ENCODE measurements at regions of chr12 and their contacts with region 1.

Region 1: DNA sequence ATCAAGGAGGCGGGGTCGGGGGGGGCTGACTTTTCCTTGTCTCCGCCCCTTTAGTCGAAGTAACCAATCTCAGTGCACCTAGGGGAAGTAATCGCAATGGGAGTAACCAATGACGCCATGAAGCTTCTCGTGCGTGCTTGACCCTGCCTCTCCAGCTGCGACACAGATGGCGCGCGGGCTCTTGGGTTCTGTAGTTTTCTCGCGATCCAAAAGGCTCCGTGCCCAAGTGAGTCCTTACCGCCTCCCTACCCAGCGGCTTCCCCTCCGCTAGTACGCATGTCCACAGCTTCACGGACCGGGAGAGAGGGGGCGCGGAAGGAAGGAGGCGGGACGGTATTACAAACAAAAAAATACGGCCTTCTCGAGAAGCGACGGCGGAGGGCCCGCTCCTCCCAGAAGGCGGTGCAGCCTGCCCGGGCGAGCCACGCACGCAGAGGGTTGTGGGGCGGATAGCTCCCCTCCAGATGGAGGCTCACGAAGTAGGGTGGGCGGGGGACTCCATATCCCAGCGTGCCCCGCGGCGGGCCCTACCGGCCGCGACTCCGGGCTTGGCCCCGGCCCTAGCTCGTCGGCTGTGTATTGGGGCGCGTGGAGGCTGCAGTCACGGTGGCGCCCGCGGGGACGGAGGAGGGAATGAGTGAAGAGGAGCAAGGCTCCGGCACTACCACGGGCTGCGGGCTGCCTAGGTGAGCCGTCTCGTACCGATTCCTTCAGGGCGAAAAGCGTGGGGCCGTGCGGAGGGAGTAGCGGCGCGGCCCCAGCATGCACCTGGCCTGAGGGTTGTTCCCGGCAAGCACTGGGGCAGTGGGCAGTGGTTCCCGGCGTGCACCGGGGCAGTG is at the start of gene TARBP2:
- DNase-seq: peak; percentile 90 to 99 (median 99)
- ATAC-seq: peak; percentile 78 to 81
- H3K4me3 Mint-ChIP-seq: peak within 1 kb of the TSS; percentile 89 to 96 (median 94)
- H3K27ac Mint-ChIP-seq: peak within 1 kb of the TSS; percentile 90 to 99 (median 97)
- H3K4me1 Mint-ChIP-seq: peaks cover 22 to 55% (median 44%) of the 10 kb centered on the region in 4 donors
- H3K27me3 Mint-ChIP-seq: no peaks in the 10 kb centered on the region
- polyA plus RNA-seq, gene TARBP2: 27.0 to 32.1 (median 27.9) TPM

Region 2: DNA sequence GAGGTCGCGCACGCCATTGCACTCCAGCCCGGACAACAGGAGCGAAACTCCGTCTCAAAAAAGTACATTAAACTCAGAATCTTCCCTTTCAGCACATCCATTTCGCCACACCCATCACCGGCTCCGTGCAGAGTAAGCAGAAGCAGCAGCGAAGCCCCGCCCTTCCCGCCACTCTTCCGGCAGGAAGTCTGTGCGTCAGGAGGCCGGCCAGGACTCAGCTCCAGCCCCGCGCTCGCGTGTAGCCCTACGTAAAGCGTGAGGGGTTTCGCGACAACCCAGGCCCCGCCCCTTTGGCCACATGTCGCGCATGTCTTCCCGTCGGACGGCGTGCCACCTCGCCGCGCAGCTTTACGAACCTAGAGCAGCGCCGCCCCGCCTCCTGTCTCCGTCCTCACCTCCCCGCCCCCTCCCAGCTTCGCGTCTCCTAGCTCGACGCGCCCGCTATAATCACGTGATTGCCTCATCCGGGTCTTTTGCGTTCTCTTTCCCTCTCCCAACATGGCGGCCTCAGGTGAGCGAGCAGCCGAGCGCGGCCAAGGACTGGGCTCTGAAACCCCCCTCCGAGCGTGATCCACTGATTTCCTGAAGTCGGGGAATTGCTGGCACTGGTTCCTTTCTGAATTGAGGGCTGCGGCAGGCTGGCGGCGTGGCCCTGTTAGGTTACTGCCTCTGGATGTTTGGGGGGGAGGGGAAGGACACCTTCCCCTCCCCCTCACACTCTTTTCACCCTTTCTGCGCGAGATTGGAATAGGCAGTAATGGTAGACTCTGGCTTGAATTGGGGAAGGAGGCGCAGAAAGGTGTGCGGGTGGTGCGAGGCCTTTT is 494.8 kb before region 1 on chr12 and contains the start of gene EIF4B:
- POLR2A ChIA-PET with region 1: interaction called, 12 read pairs
- DNase-seq: peak; percentile 95 to 100 (median 99)
- ATAC-seq: peak; percentile 91 to 93
- H3K4me3 Mint-ChIP-seq: peak within 1 kb of the TSS; percentile 96 to 100 (median 98)
- H3K27ac Mint-ChIP-seq: peak within 1 kb of the TSS; percentile 96 to 99 (median 99)
- H3K4me1 Mint-ChIP-seq: peaks cover 20 to 56% (median 51%) of the 10 kb centered on the region in 4 donors
- H3K27me3 Mint-ChIP-seq: peaks cover 0 to 3% (median 0%) of the 10 kb centered on the region in 5 donors
- polyA plus RNA-seq, gene EIF4B: 116 to 146 (median 124) TPM

Region 3: DNA sequence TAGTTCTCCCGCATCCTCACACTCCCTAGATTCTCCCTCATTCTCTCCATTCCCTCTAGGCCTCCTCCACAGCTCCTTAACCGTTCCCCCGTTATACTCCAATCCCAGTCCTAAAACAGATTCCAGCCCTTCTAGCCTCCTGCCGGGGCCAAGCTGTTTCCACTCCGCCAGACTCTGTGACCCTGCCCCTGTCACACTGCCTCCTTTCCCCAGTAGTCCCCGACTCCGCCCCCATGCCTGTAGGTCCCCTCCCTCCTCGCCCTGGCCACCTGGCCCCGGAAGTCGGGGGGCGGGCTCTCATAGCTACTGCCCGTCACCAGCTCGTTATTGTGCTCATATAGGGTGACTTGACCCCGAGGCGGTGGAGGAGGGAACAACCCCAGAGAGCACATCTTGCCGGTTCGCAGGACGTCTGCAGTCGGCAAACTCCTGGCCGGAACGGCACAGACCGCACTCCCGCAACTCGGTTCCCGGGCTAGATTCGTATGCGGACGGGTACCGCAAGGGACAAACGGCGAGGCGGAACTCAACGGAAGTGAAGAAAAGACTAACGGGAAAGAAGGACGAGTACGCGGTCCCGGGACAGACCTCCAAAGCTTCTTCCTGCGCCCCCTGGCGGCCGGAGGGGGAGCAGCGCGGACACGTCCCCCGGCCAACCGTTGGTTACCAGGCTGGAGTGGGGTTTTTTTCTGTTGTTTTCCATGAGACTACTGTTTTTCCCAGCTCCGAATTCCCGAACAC is 179.8 kb before region 1 on chr12 and contains the start of gene AAAS:
- POLR2A ChIA-PET with region 1: interaction called, 22 read pairs
- DNase-seq: peak; percentile 87 to 99 (median 92)
- ATAC-seq: peak; percentile 77 to 78
- H3K4me3 Mint-ChIP-seq: peak within 1 kb of the TSS; percentile 90 to 100 (median 98)
- H3K27ac Mint-ChIP-seq: peak within 1 kb of the TSS; percentile 96 to 99 (median 97)
- H3K4me1 Mint-ChIP-seq: peaks cover 28 to 51% (median 45%) of the 10 kb centered on the region in 4 donors
- H3K27me3 Mint-ChIP-seq: no peaks in the 10 kb centered on the region
- polyA plus RNA-seq, gene AAAS: 34.1 to 57.2 (median 39.3) TPM

Region 4: GRCh38 chr12:53451661-53452158 is 49.3 kb before region 1 on chr12 and contains the start of gene PCBP2:
- POLR2A ChIA-PET with region 1: interaction called, 36 read pairs
- DNase-seq: peak; percentile 92 to 99 (median 96)
- ATAC-seq: peak; percentile 95 to 96
- H3K4me3 Mint-ChIP-seq: peak within 1 kb of the TSS; percentile 90 to 100 (median 99)
- H3K27ac Mint-ChIP-seq: peak within 1 kb of the TSS; percentile 89 to 100 (median 100)
- H3K4me1 Mint-ChIP-seq: peaks cover 19 to 45% (median 38%) of the 10 kb centered on the region in 4 donors
- H3K27me3 Mint-ChIP-seq: peaks cover 0 to 1% (median 0%) of the 10 kb centered on the region in 5 donors
- polyA plus RNA-seq, gene PCBP2: 143 to 157 (median 152) TPM

Region 5: GRCh38 chr12:53483225-53483978 is 17.6 kb before region 1 on chr12:
- POLR2A ChIA-PET with region 1: interaction called, 48 read pairs
- DNase-seq: no peak
- ATAC-seq: no peak
- H3K4me3 Mint-ChIP-seq: peak overlapping the region in 1 of 10 donors; percentile 34
- H3K27ac Mint-ChIP-seq: peak overlapping the region in 6 of 10 donors; percentile 34 to 79 (median 54)
- H3K4me1 Mint-ChIP-seq: peaks cover 0 to 20% (median 8%) of the 10 kb centered on the region in 4 donors
- H3K27me3 Mint-ChIP-seq: no peaks in the 10 kb centered on the region

Region 6: DNA sequence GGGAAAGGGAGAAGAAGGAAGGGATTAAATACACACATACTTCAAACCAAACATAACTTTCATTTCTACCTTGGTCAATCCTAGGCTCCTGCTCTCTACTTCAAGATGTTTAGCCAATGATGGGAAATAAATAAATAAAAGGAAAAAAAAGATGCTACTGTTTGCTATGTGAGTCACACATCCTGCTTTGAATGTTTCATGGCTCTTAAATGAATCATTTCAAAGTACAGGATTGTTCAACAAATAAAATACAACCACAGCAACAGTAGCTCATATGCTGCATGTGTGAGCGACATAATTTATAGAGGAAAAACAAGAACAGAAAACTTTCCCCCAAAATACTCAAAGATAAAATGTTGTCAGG is 60.6 kb after region 1 on chr12:
- POLR2A ChIA-PET with region 1: no interaction called
- DNase-seq: no peak
- ATAC-seq: no peak
- H3K4me3 Mint-ChIP-seq: peak overlapping the region in 2 of 10 donors; percentile 3 to 68
- H3K27ac Mint-ChIP-seq: peak overlapping the region in 3 of 10 donors; percentile 70 to 86 (median 75)
- H3K4me1 Mint-ChIP-seq: peaks cover 18 to 58% (median 45%) of the 10 kb centered on the region in 4 donors
- H3K27me3 Mint-ChIP-seq: no peaks in the 10 kb centered on the region